Adrenal gland (tissue), 19 donors: ENCODE measurements at regions of chr18 and their contacts with region 1.

Region 1: GRCh38 chr18:58671111-58671631 is at the start of gene MALT1:
- DNase-seq: peak; percentile 91 to 96 (median 93)
- H3K4me3 ChIP-seq: peak within 1 kb of the TSS; percentile 49 to 98 (median 76)
- H3K27ac ChIP-seq: peak within 1 kb of the TSS; percentile 90 to 99 (median 94)
- H3K4me1 ChIP-seq: peaks cover 5 to 11% of the 10 kb centered on the region in 2 donors
- H3K27me3 ChIP-seq: no peaks in the 10 kb centered on the region
- CTCF ChIP-seq: no peak
- POLR2A ChIP-seq: peak; percentile 82 to 92
- total RNA-seq, gene MALT1: 6.7 to 19.2 (median 9.8) TPM

Region 2: DNA sequence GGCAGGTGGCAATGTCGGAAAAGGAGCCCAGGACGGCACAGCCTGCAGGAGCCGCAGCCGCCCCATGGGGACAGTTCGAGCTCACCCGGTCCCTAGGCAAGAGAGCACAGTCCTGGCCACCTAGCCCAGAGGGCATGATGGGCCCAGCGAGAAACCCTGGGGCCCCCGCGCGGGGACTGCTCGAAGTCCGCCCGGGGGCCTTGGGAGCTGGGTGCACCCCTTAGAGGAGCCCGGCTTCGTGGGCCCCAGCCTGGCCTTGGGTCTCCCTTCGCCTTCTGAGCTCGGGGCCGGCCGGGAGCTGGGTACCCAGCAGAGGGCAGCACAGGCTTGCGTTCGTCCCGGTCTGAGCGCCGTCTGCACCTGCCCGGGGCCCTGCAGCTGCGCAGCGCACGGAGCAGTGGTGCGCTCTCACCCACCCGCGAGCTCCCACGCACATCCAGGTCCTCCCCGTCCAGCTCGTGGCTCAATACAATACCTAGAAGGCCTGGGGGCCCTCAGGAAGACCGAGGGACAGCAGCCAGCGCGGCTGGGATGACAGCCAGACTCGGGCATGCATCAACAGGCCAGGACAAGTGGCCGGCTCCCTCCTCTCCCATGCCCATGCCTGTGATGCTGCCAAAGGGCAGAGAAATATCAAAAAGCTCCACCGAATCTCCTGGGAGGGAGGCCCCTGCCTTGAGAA is 97.3 kb after region 1 on chr18:
- intact Hi-C with region 1: loop called in 1 of 2 experiments (anchors 5 kb)
- DNase-seq: peak; percentile 52 to 86 (median 72)
- H3K4me3 ChIP-seq: peak overlapping the region in 1 of 4 donors; percentile 42
- H3K27ac ChIP-seq: no peak overlapping the region
- H3K4me1 ChIP-seq: peaks cover 0 to 10% of the 10 kb centered on the region in 2 donors
- H3K27me3 ChIP-seq: no peaks in the 10 kb centered on the region
- CTCF ChIP-seq: peak; percentile 47 to 81 (median 65)
- POLR2A ChIP-seq: no peak